Left lung (tissue), 14 donors: ENCODE measurements at regions of chr10 and their contacts with region 1.

Region 1: DNA sequence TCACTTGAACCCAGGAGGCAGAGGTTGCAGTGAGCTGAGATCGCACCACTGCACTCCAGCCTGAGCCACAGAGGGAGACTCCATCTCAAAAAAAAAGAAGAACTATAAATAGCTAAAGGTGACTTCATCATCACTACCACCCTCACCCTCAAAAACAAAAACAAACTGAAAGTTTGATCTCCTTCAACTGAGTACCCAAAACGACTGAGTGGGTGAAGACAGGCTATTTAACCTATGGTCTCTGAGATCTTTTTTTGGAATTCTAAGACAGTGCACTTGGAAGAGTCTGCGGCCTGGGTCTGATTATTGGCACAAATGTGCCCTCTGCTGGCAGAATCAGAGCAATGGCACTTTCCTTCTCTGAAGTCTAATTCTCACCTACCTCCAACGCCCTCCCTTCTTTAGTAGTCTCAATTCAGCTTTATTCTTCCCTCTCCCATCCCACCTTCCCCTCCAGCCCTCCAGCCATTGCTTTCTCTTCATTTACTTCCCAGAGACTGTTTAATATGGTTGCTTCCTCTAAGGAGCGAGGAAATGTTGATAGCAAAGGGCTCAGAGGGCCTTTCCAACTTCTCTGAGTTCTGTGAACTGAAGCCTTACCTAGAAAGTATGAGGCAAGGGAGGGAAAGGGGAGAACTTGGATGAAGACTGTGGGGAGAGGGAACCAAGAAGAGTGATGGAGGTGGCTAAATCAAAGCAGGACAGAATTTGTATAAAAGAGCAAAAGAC is 2.9 kb upstream of the MYOZ1 start:
- DNase-seq: peak in 3 of 4 donors; percentile 43 to 77 (median 65)
- ATAC-seq: peak; percentile 75
- H3K4me3 ChIP-seq: no peak overlapping the region
- H3K27ac ChIP-seq: no peak overlapping the region
- H3K4me1 ChIP-seq: peaks cover 0 to 25% of the 10 kb centered on the region in 2 donors
- H3K27me3 ChIP-seq: peaks cover 0 to 9% of the 10 kb centered on the region in 2 donors
- CTCF ChIP-seq: peak; percentile 74 to 83

Region 2: GRCh38 chr10:73379064-73379748 is 265.0 kb before region 1 on chr10:
- intact Hi-C with region 1: no loop called
- DNase-seq: no peak
- ATAC-seq: no peak
- H3K4me3 ChIP-seq: no peak overlapping the region
- H3K27ac ChIP-seq: no peak overlapping the region
- H3K4me1 ChIP-seq: no peaks in the 10 kb centered on the region
- H3K27me3 ChIP-seq: no peaks in the 10 kb centered on the region
- CTCF ChIP-seq: no peak

Region 3: DNA sequence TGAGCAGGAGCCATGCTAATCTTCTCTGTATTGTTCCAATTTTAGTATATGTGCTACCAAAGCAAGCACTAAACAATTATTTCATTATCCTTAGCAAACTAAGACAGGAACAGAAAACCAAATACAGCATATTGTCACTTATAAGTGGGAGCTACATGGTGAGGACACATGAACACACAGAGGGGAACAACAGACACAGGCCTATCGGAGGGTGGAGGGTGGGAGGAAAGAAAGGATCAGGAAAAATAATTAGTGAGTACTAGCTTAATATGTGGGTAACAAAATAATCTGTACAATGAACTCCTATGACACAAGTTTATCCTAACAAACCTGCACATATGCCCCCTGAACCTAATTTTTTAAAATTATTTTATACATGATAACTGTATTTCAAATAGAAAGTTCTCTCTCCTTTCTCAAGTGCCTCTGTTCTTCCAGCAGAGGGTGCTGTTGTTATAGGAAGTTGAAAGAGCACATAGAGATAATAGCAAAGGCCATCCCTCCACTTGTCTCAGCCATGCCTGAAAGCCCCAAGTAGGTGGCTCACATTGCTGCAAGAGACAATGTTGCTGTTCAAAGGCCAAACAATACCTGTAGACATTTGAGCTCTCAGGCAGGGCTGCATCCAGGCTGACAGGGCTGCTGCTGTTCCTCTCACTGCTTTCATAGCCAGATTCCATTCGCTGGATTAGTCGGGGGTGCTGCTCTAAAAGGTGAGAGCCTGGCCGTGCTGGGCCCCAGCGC is 114.9 kb before region 1 on chr10:
- intact Hi-C with region 1: loop called (anchors 2 to 10 kb)
- DNase-seq: peak in 2 of 4 donors; percentile 70 to 72
- ATAC-seq: peak; percentile 90
- H3K4me3 ChIP-seq: no peak overlapping the region
- H3K27ac ChIP-seq: no peak overlapping the region
- H3K4me1 ChIP-seq: no peaks in the 10 kb centered on the region
- H3K27me3 ChIP-seq: no peaks in the 10 kb centered on the region
- CTCF ChIP-seq: peak; percentile 74 to 81

Region 4: GRCh38 chr10:73537288-73537687 is 106.9 kb before region 1 on chr10:
- intact Hi-C with region 1: loop called in 1 of 2 experiments (anchors 10 kb)
- DNase-seq: no peak
- ATAC-seq: no peak
- H3K4me3 ChIP-seq: no peak overlapping the region
- H3K27ac ChIP-seq: no peak overlapping the region
- H3K4me1 ChIP-seq: no peaks in the 10 kb centered on the region
- H3K27me3 ChIP-seq: no peaks in the 10 kb centered on the region
- CTCF ChIP-seq: no peak

Region 5: GRCh38 chr10:74640134-74640931 is 996.2 kb after region 1 on chr10:
- intact Hi-C with region 1: no loop called
- DNase-seq: no peak
- ATAC-seq: no peak
- H3K4me3 ChIP-seq: no peak overlapping the region
- H3K27ac ChIP-seq: peak overlapping the region in 1 of 2 donors; percentile 3
- H3K4me1 ChIP-seq: no peaks in the 10 kb centered on the region
- H3K27me3 ChIP-seq: no peaks in the 10 kb centered on the region
- CTCF ChIP-seq: no peak